ENCODE measurements at regions of chr7 and their contacts with region 1.

Region 1: GRCh38 chr7:95190515-95190914 is 133.8 kb downstream of the PON1 start:
- DNase-seq: peak; percentile 4
- ATAC-seq: no peak
- H3K4me3 ChIP-seq: no peak overlapping the region
- H3K4me3 Mint-ChIP-seq: no peak overlapping the region
- H3K27ac ChIP-seq: no peak overlapping the region
- H3K27ac Mint-ChIP-seq: no peak overlapping the region
- H3K4me1 ChIP-seq: no peaks in the 10 kb centered on the region
- H3K4me1 Mint-ChIP-seq: no peaks in the 10 kb centered on the region
- H3K27me3 ChIP-seq: no peaks in the 10 kb centered on the region
- H3K27me3 Mint-ChIP-seq: no peaks in the 10 kb centered on the region
- CTCF ChIP-seq: no peak

Region 2: GRCh38 chr7:94949532-94949931 is 241.0 kb before region 1 on chr7:
- CTCF ChIA-PET with region 1: no interaction called
- POLR2A ChIA-PET with region 1: no interaction called
- intact Hi-C with region 1: no loop called
- DNase-seq: no peak
- ATAC-seq: no peak
- H3K4me3 ChIP-seq: no peak overlapping the region
- H3K4me3 Mint-ChIP-seq: no peak overlapping the region
- H3K27ac ChIP-seq: no peak overlapping the region
- H3K27ac Mint-ChIP-seq: no peak overlapping the region
- H3K4me1 ChIP-seq: no peaks in the 10 kb centered on the region
- H3K4me1 Mint-ChIP-seq: no peaks in the 10 kb centered on the region
- H3K27me3 ChIP-seq: no peaks in the 10 kb centered on the region
- H3K27me3 Mint-ChIP-seq: no peaks in the 10 kb centered on the region
- CTCF ChIP-seq: no peak

Region 3: DNA sequence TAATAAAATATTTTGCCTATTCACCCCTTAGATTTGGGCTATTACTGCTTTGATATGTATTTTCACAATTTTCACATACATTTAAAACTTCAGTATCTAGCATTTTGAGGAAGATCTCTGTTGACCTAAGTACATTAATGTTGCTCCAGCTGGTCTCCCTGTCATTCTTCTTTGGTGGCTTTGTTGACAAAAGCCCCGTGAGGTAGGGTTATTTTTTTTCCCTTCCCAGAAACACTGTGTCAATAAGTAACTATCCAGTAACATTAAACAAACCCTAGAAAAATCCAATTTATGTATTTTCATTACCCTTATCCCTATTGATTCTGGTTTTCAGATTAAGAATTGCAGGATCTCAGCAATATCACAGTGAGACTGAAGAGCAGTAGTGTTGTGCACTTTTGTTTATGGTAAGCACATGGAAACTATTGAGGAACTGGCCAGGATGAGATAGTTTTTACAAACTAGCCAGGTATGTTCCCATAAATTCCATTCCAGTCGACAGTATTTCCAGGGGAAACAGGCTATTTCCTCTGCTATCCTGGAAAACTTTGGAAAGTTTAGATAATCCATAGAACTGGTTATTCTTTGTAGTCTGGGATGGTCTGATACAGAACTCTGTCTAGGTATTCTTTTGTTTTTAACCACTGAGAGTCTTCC is 64.3 kb before region 1 on chr7:
- CTCF ChIA-PET with region 1: no interaction called
- POLR2A ChIA-PET with region 1: no interaction called
- intact Hi-C with region 1: loop called (anchors 10 kb)
- DNase-seq: no peak
- ATAC-seq: no peak
- H3K4me3 ChIP-seq: no peak overlapping the region
- H3K4me3 Mint-ChIP-seq: no peak overlapping the region
- H3K27ac ChIP-seq: no peak overlapping the region
- H3K27ac Mint-ChIP-seq: no peak overlapping the region
- H3K4me1 ChIP-seq: no peaks in the 10 kb centered on the region
- H3K4me1 Mint-ChIP-seq: no peaks in the 10 kb centered on the region
- H3K27me3 ChIP-seq: no peaks in the 10 kb centered on the region
- H3K27me3 Mint-ChIP-seq: no peaks in the 10 kb centered on the region
- CTCF ChIP-seq: no peak